Aorta (tissue), 5 donors: ENCODE measurements at regions of chr14 and their contacts with region 1.

Region 1: DNA sequence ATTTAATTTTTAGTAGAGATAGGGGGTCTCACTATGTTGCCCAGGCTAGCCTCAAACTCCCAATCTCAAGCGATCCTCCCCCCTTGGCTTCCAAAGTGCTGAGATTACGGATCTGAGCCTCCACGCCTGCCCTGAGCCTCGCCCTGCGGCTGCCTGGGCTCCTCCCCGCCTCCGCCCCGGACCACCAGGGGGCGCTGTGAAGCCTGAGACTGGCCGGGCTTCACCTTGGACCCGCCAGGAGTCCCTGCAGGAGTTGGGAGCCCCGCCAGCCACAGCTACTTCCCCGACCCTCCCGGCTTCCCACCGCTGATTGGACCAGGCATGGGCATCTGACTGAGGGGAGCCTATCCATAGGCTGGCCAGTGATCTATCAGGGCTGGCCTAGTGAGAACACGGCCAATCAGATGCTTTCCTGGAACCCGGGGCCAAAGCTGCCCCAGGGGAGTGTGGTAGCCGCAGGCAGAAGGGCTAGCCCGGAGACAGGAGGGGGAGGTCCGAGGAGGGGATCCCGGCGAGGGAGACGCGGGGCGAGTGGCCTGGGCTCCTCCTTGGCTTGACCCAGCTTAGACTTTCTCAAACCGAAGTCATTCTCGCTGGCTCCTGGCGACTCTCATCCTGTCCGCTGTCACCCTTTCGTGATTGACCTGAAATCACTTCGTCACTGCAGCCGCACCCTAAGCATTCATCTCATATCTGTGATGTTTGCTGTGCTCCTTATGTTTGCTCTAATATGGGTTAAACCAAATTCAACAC is 15.1 kb upstream of the ANKRD9 start:
- DNase-seq: peak; percentile 99 to 100
- ATAC-seq: peak; percentile 99
- H3K4me3 ChIP-seq: peak overlapping the region; percentile 32 to 50
- H3K27ac ChIP-seq: peak overlapping the region in 1 of 2 donors; percentile 42
- H3K4me1 ChIP-seq: no peaks in the 10 kb centered on the region
- H3K27me3 ChIP-seq: no peaks in the 10 kb centered on the region

Region 2: DNA sequence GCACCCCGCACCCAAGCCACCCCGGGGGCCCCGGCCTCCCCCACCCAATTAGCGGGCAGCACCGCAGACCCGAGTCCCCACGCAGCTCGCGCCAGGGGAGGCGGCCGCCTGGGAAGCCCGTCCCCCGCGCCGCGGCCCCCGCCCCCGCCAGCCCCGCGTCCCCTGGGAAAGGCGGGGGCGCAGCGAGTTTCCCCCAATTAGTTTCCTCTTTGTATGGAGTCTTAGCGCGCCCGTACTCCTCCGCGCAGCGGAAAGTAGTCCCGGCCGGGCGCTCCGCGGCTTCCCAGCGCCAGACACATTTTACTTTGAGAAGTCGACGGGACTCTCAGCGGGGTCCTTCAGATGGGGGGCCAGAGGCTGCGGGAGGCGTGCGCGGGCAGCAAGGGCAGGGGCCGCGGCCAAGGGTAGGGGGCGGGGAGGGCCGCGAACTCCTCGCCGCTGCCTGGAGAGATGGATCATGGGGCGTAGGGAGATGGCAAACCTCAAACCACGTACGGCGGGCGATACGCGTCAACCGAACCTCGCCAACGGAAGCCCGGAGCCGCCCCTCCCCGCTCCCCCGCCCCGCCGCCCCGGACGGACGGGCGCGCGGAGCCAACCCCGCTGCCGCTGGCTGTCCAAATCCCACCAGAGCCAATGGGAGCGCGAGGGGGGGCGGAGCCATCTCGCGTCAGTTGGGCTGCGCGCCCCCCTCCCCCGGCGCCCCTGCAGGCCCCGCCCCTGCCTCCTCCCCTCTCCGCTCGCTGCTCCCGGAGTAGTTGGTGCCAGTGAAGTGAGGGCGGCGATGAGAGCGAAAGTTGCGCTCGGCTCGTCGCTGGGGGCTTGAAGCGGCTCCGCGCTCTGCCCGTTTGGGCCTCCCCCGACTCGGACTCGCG is 67.5 kb after region 1 on chr14 and contains the start of gene RCOR1:
- intact Hi-C with region 1: loop called in 1 of 2 experiments (anchors 1 kb)
- DNase-seq: peak; percentile 98 to 99
- ATAC-seq: peak; percentile 96
- H3K4me3 ChIP-seq: peak within 1 kb of the TSS; percentile 88 to 99
- H3K27ac ChIP-seq: peak within 1 kb of the TSS; percentile 88 to 91
- H3K4me1 ChIP-seq: no peaks in the 10 kb centered on the region
- H3K27me3 ChIP-seq: no peaks in the 10 kb centered on the region
- total RNA-seq, gene RCOR1: 14.5 to 24.1 TPM

Region 3: GRCh38 chr14:102928412-102929240 is 404.0 kb after region 1 on chr14:
- intact Hi-C with region 1: loop called in 1 of 2 experiments (anchors 10 kb)
- DNase-seq: peak; percentile 76 to 90
- ATAC-seq: peak; percentile 43
- H3K4me3 ChIP-seq: no peak overlapping the region
- H3K27ac ChIP-seq: no peak overlapping the region
- H3K4me1 ChIP-seq: no peaks in the 10 kb centered on the region
- H3K27me3 ChIP-seq: no peaks in the 10 kb centered on the region